ENCODE measurements at regions of chr9 and their contacts with region 1.

Region 1: GRCh38 chr9:88605512-88606362 is 70.8 kb downstream of the NXNL2 start:
- DNase-seq: no peak
- H3K4me3 ChIP-seq: no peak overlapping the region
- H3K27me3 ChIP-seq: no peaks in the 10 kb centered on the region
- CTCF ChIP-seq: no peak

Region 2: GRCh38 chr9:88399966-88400365 is 205.8 kb before region 1 on chr9:
- CTCF ChIA-PET with region 1: no interaction called
- POLR2A ChIA-PET with region 1: no interaction called
- DNase-seq: no peak
- H3K4me3 ChIP-seq: no peak overlapping the region
- H3K27me3 ChIP-seq: no peaks in the 10 kb centered on the region
- CTCF ChIP-seq: no peak

Region 3: GRCh38 chr9:89309608-89310474 is 704.1 kb after region 1 on chr9:
- CTCF ChIA-PET with region 1: no interaction called
- POLR2A ChIA-PET with region 1: interaction called, 16 read pairs
- DNase-seq: no peak
- H3K4me3 ChIP-seq: peak overlapping the region; percentile 65
- H3K27me3 ChIP-seq: no peaks in the 10 kb centered on the region
- CTCF ChIP-seq: no peak